ENCODE measurements at regions of chr16 and their contacts with region 1.

Region 1: GRCh38 chr16:10587622-10588021 is 7.2 kb upstream of the EMP2 start:
- DNase-seq: no peak
- H3K4me3 ChIP-seq: no peak overlapping the region
- H3K27ac ChIP-seq: no peak overlapping the region
- H3K4me1 ChIP-seq: peaks cover 23% of the 10 kb centered on the region
- H3K27me3 ChIP-seq: no peaks in the 10 kb centered on the region
- CTCF ChIP-seq: no peak

Region 2: DNA sequence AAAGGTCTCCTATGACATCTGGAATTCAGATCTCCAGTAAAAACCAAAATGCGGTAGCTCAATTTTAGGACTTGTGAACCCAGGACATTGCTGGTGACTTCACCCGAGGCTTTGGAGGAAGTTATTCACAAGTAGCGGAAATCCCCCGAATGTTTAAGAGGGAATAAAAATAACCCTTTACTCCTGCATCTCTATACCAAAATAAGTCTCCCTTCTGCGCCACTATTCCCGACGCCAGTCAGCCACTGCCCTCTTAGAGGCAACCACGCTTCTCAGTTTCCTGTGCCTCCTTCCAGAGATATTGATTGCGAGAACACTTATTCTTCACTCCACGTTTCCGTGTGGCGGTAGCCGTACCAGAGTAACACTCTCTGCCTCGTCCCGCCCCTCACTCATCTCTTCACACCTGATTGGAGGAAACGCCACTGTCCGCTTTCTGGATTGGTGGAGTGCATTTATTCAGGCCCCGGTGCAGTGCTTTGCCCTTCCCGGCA is 34.6 kb before region 1 on chr16:
- CTCF ChIA-PET with region 1: no interaction called
- POLR2A ChIA-PET with region 1: interaction called, 10 read pairs
- intact Hi-C with region 1: no loop called
- DNase-seq: peak in 1 of 2 experiments; percentile 59
- H3K4me3 ChIP-seq: no peak overlapping the region
- H3K27ac ChIP-seq: no peak overlapping the region
- H3K4me1 ChIP-seq: peaks cover 15% of the 10 kb centered on the region
- H3K27me3 ChIP-seq: no peaks in the 10 kb centered on the region
- CTCF ChIP-seq: no peak